ENCODE measurements at regions of chr20 and their contacts with region 1.

Region 1: DNA sequence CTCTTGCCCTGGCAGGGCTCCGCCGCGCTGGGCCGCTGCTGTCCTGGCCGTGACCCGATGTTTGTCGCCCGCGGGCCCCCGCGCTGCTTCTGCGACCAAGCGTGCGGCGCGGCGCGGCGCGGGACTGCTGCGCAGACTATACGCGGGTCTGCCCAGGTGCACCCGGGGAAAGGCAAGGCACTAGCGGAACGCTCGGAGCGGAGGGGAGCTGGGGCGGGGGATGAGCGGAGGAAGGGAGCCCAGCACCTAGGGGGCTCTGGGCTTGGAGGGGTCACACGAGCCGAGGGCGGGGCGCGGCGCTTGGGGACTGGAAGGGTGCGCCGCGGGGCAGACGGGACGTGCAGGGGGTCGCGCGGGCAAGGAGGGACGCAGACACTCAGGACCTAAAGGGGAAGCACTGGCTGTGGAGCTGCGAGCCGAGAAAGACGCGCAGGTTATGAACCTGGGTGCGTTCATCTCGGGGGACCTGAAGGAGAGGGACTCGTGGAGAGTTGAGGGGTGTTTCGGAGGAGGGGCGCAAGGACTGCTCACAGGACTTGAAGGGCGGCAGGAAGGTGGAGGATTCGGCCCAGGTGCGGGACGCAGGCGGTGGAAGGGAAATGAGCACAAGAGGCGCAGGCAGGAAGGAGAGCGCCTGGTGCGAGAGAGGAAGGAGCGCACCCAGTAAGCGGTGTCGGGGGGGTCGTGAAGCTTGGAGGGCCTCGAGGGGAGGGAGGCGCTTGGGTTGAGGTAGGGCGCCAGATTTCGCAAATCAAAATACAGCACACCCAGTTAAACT is 40.8 kb upstream of the ZNFX1 start:
- DNase-seq: peak in 2 of 9 donors; percentile 7 to 8
- ATAC-seq: peak; percentile 45
- H3K4me3 ChIP-seq: peak overlapping the region; percentile 49
- H3K4me3 Mint-ChIP-seq: peak overlapping the region; percentile 63 to 93 (median 86)
- H3K27ac ChIP-seq: no peak overlapping the region
- H3K27ac Mint-ChIP-seq: no peak overlapping the region
- H3K4me1 ChIP-seq: peaks cover 5 to 8% of the 10 kb centered on the region in 2 donors
- H3K4me1 Mint-ChIP-seq: peaks cover 10 to 23% (median 17%) of the 10 kb centered on the region in 7 donors
- H3K27me3 ChIP-seq: peaks cover 7 to 29% of the 10 kb centered on the region in 2 donors
- H3K27me3 Mint-ChIP-seq: peaks cover 39 to 82% (median 51%) of the 10 kb centered on the region in 5 donors

Region 2: DNA sequence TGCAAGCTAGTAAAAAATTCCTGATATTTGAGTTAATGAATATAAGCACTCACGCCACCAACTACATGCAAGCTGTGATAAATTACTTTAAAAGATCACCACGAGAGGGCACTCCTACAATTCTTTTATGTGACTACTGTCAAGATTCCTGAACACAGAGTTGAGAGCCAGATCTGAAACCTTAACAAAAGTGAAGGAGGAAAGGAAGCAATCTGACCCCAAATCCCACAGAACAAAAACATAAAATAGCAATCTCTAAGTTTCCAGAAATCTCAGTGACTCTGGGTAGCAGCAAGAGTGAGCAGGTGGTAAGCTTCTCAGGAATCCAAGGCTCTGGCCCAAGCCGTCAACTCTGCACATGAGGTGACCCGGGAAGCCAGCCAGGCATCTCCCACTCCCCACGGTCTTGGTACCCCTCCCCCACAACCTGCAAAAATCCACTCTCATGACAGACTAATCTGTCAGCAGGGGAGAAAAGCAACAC is 185.6 kb before region 1 on chr20:
- CTCF ChIA-PET with region 1: no interaction called
- POLR2A ChIA-PET with region 1: no interaction called
- intact Hi-C with region 1: loop called in 1 of 2 experiments (anchors 5 kb)
- DNase-seq: peak in 7 of 9 donors; percentile 33 to 68 (median 62)
- ATAC-seq: peak; percentile 68
- H3K4me3 ChIP-seq: no peak overlapping the region
- H3K4me3 Mint-ChIP-seq: no peak overlapping the region
- H3K27ac ChIP-seq: no peak overlapping the region
- H3K27ac Mint-ChIP-seq: peak overlapping the region in 8 of 9 donors; percentile 1 to 74 (median 62)
- H3K4me1 ChIP-seq: no peaks in the 10 kb centered on the region
- H3K4me1 Mint-ChIP-seq: peaks cover 7 to 16% (median 10%) of the 10 kb centered on the region in 7 donors
- H3K27me3 ChIP-seq: peaks cover 0 to 3% of the 10 kb centered on the region in 2 donors
- H3K27me3 Mint-ChIP-seq: no peaks in the 10 kb centered on the region

Region 3: DNA sequence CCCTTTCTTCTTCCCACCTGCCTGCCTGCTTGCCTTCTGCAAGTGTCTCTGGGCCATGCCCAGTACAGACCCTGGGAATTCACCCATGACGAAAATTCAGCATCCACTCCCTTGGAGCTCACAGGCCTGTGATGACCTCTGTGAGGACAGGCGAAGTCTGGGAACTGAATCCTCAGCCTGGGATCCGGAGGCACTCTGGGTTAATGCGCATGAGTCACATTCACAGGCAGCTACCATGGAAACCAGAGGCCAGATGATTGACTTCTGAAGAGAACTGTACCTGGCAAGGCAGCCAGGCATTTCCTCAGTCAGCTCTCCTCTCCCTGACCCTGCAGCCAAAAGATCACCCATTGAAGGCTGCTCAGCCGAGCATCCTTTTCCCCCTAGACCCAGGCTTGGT is 535.0 kb after region 1 on chr20:
- CTCF ChIA-PET with region 1: no interaction called
- POLR2A ChIA-PET with region 1: no interaction called
- intact Hi-C with region 1: no loop called
- DNase-seq: no peak
- ATAC-seq: no peak
- H3K4me3 ChIP-seq: no peak overlapping the region
- H3K4me3 Mint-ChIP-seq: no peak overlapping the region
- H3K27ac ChIP-seq: no peak overlapping the region
- H3K27ac Mint-ChIP-seq: peak overlapping the region in 2 of 9 donors; percentile 36 to 43
- H3K4me1 ChIP-seq: no peaks in the 10 kb centered on the region
- H3K4me1 Mint-ChIP-seq: peaks cover 2 to 30% (median 14%) of the 10 kb centered on the region in 7 donors
- H3K27me3 ChIP-seq: no peaks in the 10 kb centered on the region
- H3K27me3 Mint-ChIP-seq: no peaks in the 10 kb centered on the region

Measured in naive thymus-derived CD4-positive, alpha-beta T cell (primary cell).